Activated T-helper 2 cell treated with anti-CD3 and anti-CD28 coated beads, Interferon-gamma antibody, Interleukin-2, Interleukin-4, amounts not matched to agents 10 μg/mL and 5 μg/mL and 100 μg/mL, durations not matched to agents 14 hours and 24 hours and 36 hours (primary cell): ENCODE measurements at regions of chr1 and their contacts with region 1.

Region 1: GRCh38 chr1:24541711-24542346 is 14.1 kb upstream of the NCMAP start:
- DNase-seq: no peak
- H3K4me3 Mint-ChIP-seq: no peak overlapping the region
- H3K27ac Mint-ChIP-seq: peak overlapping the region; percentile 82
- H3K4me1 Mint-ChIP-seq: peaks cover 53% of the 10 kb centered on the region
- H3K27me3 Mint-ChIP-seq: no peaks in the 10 kb centered on the region

Region 2: GRCh38 chr1:24491577-24492360 is 50.1 kb before region 1 on chr1:
- intact Hi-C with region 1: loop called (anchors 1 kb)
- DNase-seq: no peak
- H3K4me3 Mint-ChIP-seq: no peak overlapping the region
- H3K27ac Mint-ChIP-seq: no peak overlapping the region
- H3K4me1 Mint-ChIP-seq: peaks cover 20% of the 10 kb centered on the region
- H3K27me3 Mint-ChIP-seq: no peaks in the 10 kb centered on the region

Region 3: GRCh38 chr1:24586970-24587820 is 45.4 kb after region 1 on chr1:
- intact Hi-C with region 1: loop called (anchors 2 kb)
- DNase-seq: peak; percentile 39
- H3K4me3 Mint-ChIP-seq: no peak overlapping the region
- H3K27ac Mint-ChIP-seq: no peak overlapping the region
- H3K4me1 Mint-ChIP-seq: no peaks in the 10 kb centered on the region
- H3K27me3 Mint-ChIP-seq: peaks cover 8% of the 10 kb centered on the region